ENCODE measurements at regions of chr19 and their contacts with region 1.

Region 1: DNA sequence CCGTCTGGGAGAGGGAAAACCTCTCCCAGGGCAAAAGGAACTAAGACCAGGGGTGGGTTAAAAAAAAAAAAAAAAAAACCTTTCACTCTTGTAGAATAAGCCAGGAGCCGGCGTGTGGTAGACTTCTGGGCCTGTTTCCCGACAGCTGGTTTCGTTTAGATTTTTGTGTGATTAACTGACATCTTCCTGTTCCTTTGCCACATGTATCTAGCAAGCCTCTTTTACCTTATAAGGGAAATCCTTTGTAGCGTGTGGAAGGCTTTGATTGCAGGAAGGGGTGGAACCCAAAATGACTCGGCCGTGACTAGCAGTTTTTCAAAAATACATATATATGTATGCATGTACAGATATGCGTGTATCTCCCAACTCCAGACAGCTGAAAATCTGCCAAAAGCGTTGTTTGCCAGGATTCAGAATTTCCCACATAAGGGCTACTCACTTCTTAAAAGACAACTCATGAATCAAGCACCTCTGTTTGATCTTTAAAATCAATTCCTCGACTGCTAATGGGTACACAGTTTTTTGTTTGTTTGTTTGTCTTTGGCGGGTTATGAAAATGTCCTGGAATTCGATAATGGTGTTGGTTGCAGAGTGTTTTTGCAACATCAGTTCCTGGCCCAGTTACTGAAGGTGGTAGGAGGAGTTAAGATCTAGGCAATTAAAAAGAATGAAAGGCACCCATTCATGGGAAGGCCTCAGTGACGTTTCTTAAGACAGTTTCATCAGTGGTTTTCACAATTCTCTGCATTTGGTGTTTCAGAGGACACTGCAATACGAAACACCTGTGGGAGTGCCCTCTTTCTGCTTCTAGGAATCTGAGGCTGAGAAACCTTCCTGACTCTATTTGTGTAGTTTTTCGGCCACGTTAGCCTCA is 2.7 kb downstream of the TPM4 start:
- DNase-seq: peak; percentile 94
- H3K4me3 ChIP-seq: peak overlapping the region; percentile 6 to 79 (median 41)
- H3K27ac ChIP-seq: peak overlapping the region; percentile 99
- H3K4me1 ChIP-seq: peaks cover 30% of the 10 kb centered on the region
- H3K27me3 ChIP-seq: no peaks in the 10 kb centered on the region
- CTCF ChIP-seq: no peak

Region 2: DNA sequence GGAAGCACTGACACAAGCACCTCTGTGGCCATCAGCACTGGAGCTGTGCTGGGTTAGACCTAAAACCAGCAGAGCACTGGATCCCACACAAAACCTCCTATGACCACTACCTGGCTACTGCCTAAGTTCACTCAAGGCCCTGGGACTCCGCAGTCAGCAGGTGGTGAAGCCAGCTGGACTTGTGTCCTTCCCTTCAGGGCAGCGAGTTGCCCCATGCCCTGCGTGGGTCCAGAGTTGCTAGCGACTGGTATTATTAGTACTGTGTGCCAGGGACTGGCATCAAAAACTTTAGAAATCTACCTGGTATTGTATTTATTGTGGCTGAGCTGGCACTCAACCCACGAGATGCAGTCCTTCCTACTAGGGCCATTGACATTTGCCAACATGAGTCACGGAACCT is 124.2 kb before region 1 on chr19:
- CTCF ChIA-PET with region 1: no interaction called
- dilution Hi-C with region 1: no loop called
- in situ Hi-C with region 1: no loop called
- intact Hi-C with region 1: no loop called
- DNase-seq: no peak
- H3K4me3 ChIP-seq: no peak overlapping the region
- H3K27ac ChIP-seq: no peak overlapping the region
- H3K4me1 ChIP-seq: no peaks in the 10 kb centered on the region
- H3K27me3 ChIP-seq: peaks cover 4% of the 10 kb centered on the region
- CTCF ChIP-seq: no peak

Region 3: DNA sequence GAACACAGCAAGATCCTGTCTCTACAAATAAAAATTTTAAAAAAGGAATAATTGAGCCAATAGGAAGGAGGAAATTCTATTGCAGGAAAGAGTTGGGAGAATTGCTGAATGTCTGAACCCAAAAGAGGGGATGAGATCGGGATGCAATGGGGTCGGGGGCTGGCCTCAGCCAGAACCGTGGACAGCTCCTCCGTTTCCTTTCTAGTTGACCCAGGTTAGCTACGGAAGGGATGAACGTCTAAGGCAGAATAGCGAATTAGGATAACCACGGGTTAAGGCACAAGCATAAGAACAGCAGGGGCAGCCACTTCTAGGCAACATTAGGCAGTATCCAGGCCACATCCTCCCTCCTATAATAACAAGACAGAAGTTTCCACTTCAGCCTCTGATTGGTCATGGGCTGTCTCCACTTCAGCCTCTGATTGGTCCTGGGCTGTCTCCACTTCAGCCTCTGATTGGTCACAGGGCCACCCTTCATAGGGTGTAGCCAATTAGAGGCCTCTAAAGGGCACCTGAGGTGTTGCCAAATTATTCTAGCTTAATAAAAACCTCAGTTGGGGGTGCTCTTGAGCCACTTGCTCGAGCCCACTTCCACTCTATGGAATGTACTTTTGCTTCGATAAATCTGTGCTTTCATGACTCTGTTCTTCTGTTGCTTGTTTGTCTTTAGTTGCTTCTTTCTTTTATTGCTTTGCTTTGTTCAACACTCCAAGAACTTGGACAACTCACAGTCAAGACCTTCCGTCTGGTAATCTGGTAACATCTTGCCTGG is 27.6 kb before region 1 on chr19:
- CTCF ChIA-PET with region 1: no interaction called
- dilution Hi-C with region 1: no loop called
- in situ Hi-C with region 1: no loop called
- intact Hi-C with region 1: no loop called
- DNase-seq: peak; percentile 26
- H3K4me3 ChIP-seq: no peak overlapping the region
- H3K27ac ChIP-seq: no peak overlapping the region
- H3K4me1 ChIP-seq: no peaks in the 10 kb centered on the region
- H3K27me3 ChIP-seq: no peaks in the 10 kb centered on the region
- CTCF ChIP-seq: no peak

Region 4: GRCh38 chr19:16062789-16063188 is 16.2 kb before region 1 on chr19:
- CTCF ChIA-PET with region 1: no interaction called
- dilution Hi-C with region 1: no loop called
- in situ Hi-C with region 1: no loop called
- intact Hi-C with region 1: loop called (anchors 2 kb)
- DNase-seq: no peak
- H3K4me3 ChIP-seq: no peak overlapping the region
- H3K27ac ChIP-seq: no peak overlapping the region
- H3K4me1 ChIP-seq: peaks cover 12% of the 10 kb centered on the region
- H3K27me3 ChIP-seq: no peaks in the 10 kb centered on the region
- CTCF ChIP-seq: peak; percentile 87 to 98

Region 5: GRCh38 chr19:16145414-16145813 is 66.4 kb after region 1 on chr19:
- CTCF ChIA-PET with region 1: interaction called, 33 read pairs
- dilution Hi-C with region 1: no loop called
- in situ Hi-C with region 1: no loop called
- intact Hi-C with region 1: no loop called
- DNase-seq: no peak
- H3K4me3 ChIP-seq: no peak overlapping the region
- H3K27ac ChIP-seq: no peak overlapping the region
- H3K4me1 ChIP-seq: peaks cover 5% of the 10 kb centered on the region
- H3K27me3 ChIP-seq: no peaks in the 10 kb centered on the region
- CTCF ChIP-seq: no peak